HepG2 (cell line): ENCODE measurements at regions of chr14 and their contacts with region 1.

Region 1: DNA sequence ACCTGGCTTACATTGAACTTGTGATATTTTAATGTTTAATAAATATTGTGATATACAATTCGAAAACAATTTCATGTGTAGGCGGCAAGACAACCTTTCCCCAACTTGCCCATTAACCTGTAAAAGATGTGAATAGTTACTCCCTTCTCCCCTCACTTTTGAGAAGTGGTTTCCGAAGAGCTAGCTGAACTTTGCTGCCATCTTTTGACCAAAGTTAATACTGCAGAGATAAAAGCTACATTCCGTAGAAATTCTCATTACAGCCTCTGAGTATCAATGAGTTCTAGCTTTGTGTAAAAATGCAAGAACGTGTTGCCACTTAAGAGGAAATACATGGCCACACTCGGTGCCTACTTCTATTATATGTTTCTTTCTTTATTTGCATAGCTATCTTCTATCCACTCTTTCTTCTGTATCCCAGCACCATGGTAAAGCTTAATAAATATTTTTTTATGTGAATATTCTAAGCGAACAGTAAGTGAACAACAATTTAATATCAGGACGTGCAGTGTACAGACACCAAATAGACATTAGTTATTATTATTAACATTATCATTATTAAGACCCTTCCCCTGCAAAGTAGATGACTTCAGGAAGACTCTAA is 105.1 kb upstream of the TMEM260 start:
- DNase-seq: peak; percentile 16
- ATAC-seq: no peak; the same call in 2 of the 3 replicates
- H3K4me3 ChIP-seq: no peak overlapping the region
- H3K27ac ChIP-seq: no peak overlapping the region
- H3K4me1 ChIP-seq: no peaks in the 10 kb centered on the region
- H3K27me3 ChIP-seq: no peaks in the 10 kb centered on the region
- CTCF ChIP-seq: peak; percentile 78
- EP300 ChIP-seq: no peak
- POLR2A ChIP-seq: no peak
- RAD21 ChIP-seq: peak; percentile 36; the same call in 1 of the 2 replicates

Region 2: DNA sequence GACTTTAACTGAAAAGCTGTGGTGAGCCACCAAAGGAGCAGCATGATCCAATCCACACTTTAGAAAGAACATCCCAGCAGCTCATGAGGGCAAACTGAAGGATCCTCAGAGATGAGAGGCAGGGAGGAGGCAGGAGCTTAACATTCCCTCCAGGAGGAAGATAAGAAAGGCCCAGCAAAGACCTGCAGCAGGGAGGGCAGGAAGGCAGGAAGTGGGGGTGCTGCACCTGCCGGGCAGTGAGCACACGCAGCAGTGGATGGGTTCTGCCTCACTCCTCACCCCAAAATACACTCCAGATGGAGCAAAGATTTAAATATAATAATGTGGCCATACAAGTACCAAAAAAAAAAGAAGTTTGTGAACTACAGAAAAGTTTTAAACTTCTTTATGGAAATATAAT is 1620.3 kb before region 1 on chr14:
- CTCF ChIA-PET with region 1: no interaction called
- POLR2A ChIA-PET with region 1: no interaction called
- in situ Hi-C with region 1: no loop called
- intact Hi-C with region 1: no loop called
- DNase-seq: no peak
- ATAC-seq: no peak
- H3K4me3 ChIP-seq: no peak overlapping the region
- H3K27ac ChIP-seq: no peak overlapping the region
- H3K4me1 ChIP-seq: 0 out of 2 replicates have a peak, but pooled peaks cover 4% of the 10 kb centered on the region
- H3K27me3 ChIP-seq: no peaks in the 10 kb centered on the region
- CTCF ChIP-seq: no peak
- EP300 ChIP-seq: no peak
- POLR2A ChIP-seq: no peak
- RAD21 ChIP-seq: no peak

Region 3: DNA sequence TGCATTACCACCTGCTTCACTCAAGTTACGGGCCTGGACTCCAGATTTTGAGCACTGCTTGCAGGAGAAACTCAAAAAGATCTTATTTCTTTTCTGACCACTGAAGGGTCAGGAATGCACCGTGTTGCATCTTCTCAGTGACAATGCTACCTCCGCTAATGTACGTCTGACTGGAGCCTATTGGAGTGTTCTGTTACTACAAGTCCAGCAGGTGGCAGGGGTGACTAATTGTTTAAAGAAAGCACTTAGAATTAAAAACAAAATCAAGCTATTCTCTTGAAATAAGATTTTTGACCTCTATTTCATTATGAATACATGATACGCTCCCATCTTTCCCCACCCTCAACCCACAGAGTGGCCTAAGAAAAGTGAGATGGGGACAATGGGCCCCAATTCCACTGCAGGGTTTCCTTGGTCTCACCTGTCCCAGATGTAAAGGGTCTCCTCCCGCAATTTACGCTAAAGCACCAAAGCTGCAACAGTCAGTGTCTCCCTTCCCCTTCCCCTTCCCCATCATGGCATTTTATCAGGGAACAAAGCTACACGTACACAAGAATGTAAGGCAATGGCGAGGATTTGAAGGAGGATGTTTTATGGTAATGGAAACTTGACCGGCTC is 1036.3 kb before region 1 on chr14:
- CTCF ChIA-PET with region 1: no interaction called
- POLR2A ChIA-PET with region 1: no interaction called
- in situ Hi-C with region 1: loop called (anchors 10 kb)
- intact Hi-C with region 1: loop called (anchors 1 kb)
- DNase-seq: peak; percentile 55
- ATAC-seq: peak; percentile 82
- H3K4me3 ChIP-seq: no peak overlapping the region
- H3K27ac ChIP-seq: no peak overlapping the region
- H3K4me1 ChIP-seq: peaks cover 33% of the 10 kb centered on the region
- H3K27me3 ChIP-seq: no peaks in the 10 kb centered on the region
- CTCF ChIP-seq: peak; percentile 71
- EP300 ChIP-seq: no peak
- POLR2A ChIP-seq: no peak
- RAD21 ChIP-seq: peak; percentile 53; the same call in 1 of the 2 replicates

Region 4: GRCh38 chr14:55707365-55707804 is 767.1 kb before region 1 on chr14:
- CTCF ChIA-PET with region 1: no interaction called
- POLR2A ChIA-PET with region 1: no interaction called
- in situ Hi-C with region 1: no loop called
- intact Hi-C with region 1: loop called (anchors 10 kb)
- DNase-seq: peak; percentile 31
- ATAC-seq: 0 out of 3 replicates have a peak, but pooled peaks have one; percentile 35
- H3K4me3 ChIP-seq: no peak overlapping the region
- H3K27ac ChIP-seq: no peak overlapping the region
- H3K4me1 ChIP-seq: no peaks in the 10 kb centered on the region
- H3K27me3 ChIP-seq: no peaks in the 10 kb centered on the region
- CTCF ChIP-seq: peak; percentile 58
- EP300 ChIP-seq: no peak
- POLR2A ChIP-seq: no peak
- RAD21 ChIP-seq: peak; percentile 46

Region 5: DNA sequence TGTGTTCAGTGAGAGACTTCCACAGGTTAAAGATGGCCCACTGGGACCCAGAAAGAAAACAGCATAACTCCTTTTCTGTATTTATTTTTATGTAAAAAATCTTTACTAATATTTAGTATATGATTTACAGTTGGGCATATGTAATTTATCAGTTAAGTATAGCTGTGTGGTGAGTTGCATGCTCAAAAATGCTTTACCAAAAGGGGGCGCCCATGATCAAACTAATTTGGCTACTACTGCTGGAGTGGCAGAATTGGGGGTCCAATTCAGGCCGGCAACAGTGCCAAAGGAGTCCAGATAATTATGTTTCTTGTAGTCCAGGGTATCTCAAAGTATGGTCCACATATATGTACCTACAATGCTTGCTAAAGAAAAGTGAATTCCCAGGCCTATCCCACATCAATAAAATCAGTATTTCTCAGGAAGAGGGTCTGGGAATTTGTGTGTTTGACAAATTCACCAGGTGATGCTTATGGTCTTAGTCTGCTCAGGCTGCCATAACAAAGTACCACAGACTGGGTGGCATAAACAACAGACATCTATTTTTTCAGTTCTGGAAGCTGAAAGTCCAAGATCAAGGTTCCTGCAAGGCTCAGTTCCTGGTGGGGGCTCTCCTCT is 742.5 kb before region 1 on chr14:
- CTCF ChIA-PET with region 1: interaction called, 5 read pairs
- POLR2A ChIA-PET with region 1: no interaction called
- in situ Hi-C with region 1: no loop called
- intact Hi-C with region 1: loop called (anchors 10 kb)
- DNase-seq: peak; percentile 16
- ATAC-seq: peak; percentile 55; the same call in 2 of the 3 replicates
- H3K4me3 ChIP-seq: no peak overlapping the region
- H3K27ac ChIP-seq: no peak overlapping the region
- H3K4me1 ChIP-seq: no peaks in the 10 kb centered on the region
- H3K27me3 ChIP-seq: no peaks in the 10 kb centered on the region
- CTCF ChIP-seq: peak; percentile 54
- EP300 ChIP-seq: no peak
- POLR2A ChIP-seq: no peak
- RAD21 ChIP-seq: no peak

Region 6: GRCh38 chr14:55864890-55865655 is 609.4 kb before region 1 on chr14:
- CTCF ChIA-PET with region 1: no interaction called
- POLR2A ChIA-PET with region 1: no interaction called
- in situ Hi-C with region 1: no loop called
- intact Hi-C with region 1: loop called (anchors 10 kb)
- DNase-seq: no peak
- ATAC-seq: peak; percentile 41
- H3K4me3 ChIP-seq: no peak overlapping the region
- H3K27ac ChIP-seq: no peak overlapping the region
- H3K4me1 ChIP-seq: no peaks in the 10 kb centered on the region
- H3K27me3 ChIP-seq: no peaks in the 10 kb centered on the region
- CTCF ChIP-seq: peak; percentile 41
- EP300 ChIP-seq: no peak
- POLR2A ChIP-seq: no peak
- RAD21 ChIP-seq: no peak